Ovary (tissue), 10 donors: ENCODE measurements at regions of chr1 and their contacts with region 1.

Region 1: GRCh38 chr1:58585581-58586151 is 8.6 kb upstream of the TACSTD2 start:
- DNase-seq: no peak
- H3K4me3 ChIP-seq: no peak overlapping the region
- H3K27ac ChIP-seq: no peak overlapping the region
- H3K4me1 ChIP-seq: peaks cover 13% of the 10 kb centered on the region
- H3K27me3 ChIP-seq: no peaks in the 10 kb centered on the region
- CTCF ChIP-seq: no peak
- EP300 ChIP-seq: no peak
- POLR2A ChIP-seq: no peak

Region 2: DNA sequence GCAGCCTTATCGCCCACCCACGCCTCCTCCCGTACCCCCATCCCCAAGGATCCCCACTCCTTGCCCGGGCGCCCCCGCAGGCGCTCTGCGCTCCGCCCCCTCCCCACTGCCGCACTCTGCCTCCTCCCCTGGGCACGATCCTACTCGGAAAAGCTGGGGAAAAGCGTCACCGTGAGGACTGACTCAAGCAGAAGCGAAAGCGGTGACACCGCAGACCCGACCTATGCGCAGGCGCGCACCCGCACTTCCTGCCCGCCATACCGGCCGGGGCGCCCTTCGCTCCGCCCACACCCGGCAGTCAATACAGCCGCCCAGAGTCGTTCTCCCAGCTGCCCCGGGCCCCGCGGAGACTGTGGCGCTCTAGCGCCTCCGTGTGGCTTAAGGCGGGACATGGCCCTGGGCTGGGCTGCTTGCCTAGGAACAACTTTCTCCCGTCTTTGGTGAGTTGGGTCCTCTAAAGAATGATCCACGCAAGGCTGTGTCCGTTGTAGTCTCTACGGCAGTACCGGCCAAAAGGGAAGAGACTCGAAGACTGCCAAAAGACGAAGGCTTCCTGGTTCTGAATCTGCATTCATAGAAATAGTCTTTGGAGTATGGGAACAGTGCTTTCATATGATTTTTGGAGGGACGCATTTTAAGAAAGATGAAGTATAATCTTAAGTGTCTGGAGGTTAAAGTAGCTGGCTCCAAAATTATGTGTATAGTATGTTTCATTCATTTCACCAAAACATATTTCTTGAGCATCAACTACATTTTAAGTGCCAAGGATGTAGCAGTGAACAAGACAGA is 39.0 kb before region 1 on chr1 and contains the start of gene OMA1:
- intact Hi-C with region 1: loop called in 1 of 4 experiments (anchors 2 kb)
- DNase-seq: peak; percentile 97 to 99 (median 97)
- H3K4me3 ChIP-seq: peak within 1 kb of the TSS; percentile 73
- H3K27ac ChIP-seq: peak within 1 kb of the TSS; percentile 98 to 100
- H3K4me1 ChIP-seq: peaks cover 6% of the 10 kb centered on the region
- H3K27me3 ChIP-seq: no peaks in the 10 kb centered on the region
- CTCF ChIP-seq: peak; percentile 96 to 98 (median 98)
- EP300 ChIP-seq: no peak
- POLR2A ChIP-seq: peak; percentile 89
- total RNA-seq, gene OMA1: 29.8 to 51.5 (median 36.2) TPM

Region 3: GRCh38 chr1:58561633-58562032 is 24.0 kb before region 1 on chr1:
- intact Hi-C with region 1: no loop called
- DNase-seq: no peak
- H3K4me3 ChIP-seq: no peak overlapping the region
- H3K27ac ChIP-seq: no peak overlapping the region
- H3K4me1 ChIP-seq: no peaks in the 10 kb centered on the region
- H3K27me3 ChIP-seq: no peaks in the 10 kb centered on the region
- CTCF ChIP-seq: no peak
- EP300 ChIP-seq: no peak
- POLR2A ChIP-seq: no peak